Transverse colon (tissue), 4 donors: ENCODE measurements at regions of chr2 and their contacts with region 1.

Region 1: GRCh38 chr2:35228584-35228983 is 1127.0 kb upstream of the CRIM1 start:
- DNase-seq: no peak
- H3K4me3 ChIP-seq: no peak overlapping the region
- H3K27ac ChIP-seq: no peak overlapping the region
- H3K4me1 ChIP-seq: no peaks in the 10 kb centered on the region
- H3K27me3 ChIP-seq: no peaks in the 10 kb centered on the region
- CTCF ChIP-seq: no peak
- EP300 ChIP-seq: no peak
- POLR2A ChIP-seq: no peak

Region 2: DNA sequence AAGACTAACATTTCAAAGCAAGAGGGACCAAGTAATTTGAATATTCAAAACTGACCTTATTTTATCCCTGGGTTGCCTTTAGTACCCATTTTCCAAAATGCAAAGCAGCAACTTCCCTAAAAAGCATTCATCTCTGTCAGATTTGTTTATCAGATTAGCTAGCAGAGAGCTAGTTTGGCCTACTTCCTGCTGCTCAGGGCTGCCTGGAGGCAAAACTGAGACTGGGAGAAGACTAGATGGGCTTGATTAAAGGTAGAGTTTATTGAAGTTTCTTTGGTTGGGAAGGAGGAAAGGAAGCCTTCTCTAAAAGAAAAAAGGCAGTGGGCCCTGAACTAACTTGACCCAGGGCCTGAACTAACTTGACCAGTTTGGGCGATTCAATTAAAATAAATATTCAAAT is 1203.4 kb before region 1 on chr2:
- in situ Hi-C with region 1: no loop called
- intact Hi-C with region 1: no loop called
- DNase-seq: no peak
- H3K4me3 ChIP-seq: no peak overlapping the region
- H3K27ac ChIP-seq: no peak overlapping the region
- H3K4me1 ChIP-seq: no peaks in the 10 kb centered on the region
- H3K27me3 ChIP-seq: no peaks in the 10 kb centered on the region
- CTCF ChIP-seq: no peak
- EP300 ChIP-seq: no peak
- POLR2A ChIP-seq: no peak

Region 3: GRCh38 chr2:35199313-35199712 is 29.3 kb before region 1 on chr2:
- in situ Hi-C with region 1: no loop called
- intact Hi-C with region 1: no loop called
- DNase-seq: no peak
- H3K4me3 ChIP-seq: no peak overlapping the region
- H3K27ac ChIP-seq: no peak overlapping the region
- H3K4me1 ChIP-seq: no peaks in the 10 kb centered on the region
- H3K27me3 ChIP-seq: no peaks in the 10 kb centered on the region
- CTCF ChIP-seq: no peak
- EP300 ChIP-seq: no peak
- POLR2A ChIP-seq: no peak

Region 4: DNA sequence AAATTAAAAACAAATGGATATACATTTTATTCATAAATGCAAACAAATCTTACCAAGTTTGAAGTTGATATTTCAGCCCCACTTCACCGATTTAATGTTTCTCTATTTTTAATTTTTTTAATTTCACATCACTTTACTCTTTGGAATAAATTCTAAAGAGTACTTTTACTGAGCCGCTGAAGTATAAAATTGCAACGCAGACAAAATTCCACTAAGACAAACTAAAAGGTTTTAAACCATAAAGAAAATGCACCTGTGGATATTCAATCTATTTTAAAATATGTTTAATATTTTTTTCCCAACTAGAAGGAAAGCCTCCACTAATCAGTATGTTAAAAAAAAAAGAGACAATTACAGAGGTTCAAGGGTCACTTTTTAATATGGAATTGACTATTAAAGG is 53.1 kb after region 1 on chr2:
- in situ Hi-C with region 1: no loop called
- intact Hi-C with region 1: loop called (anchors 2 kb)
- DNase-seq: no peak
- H3K4me3 ChIP-seq: no peak overlapping the region
- H3K27ac ChIP-seq: no peak overlapping the region
- H3K4me1 ChIP-seq: no peaks in the 10 kb centered on the region
- H3K27me3 ChIP-seq: no peaks in the 10 kb centered on the region
- CTCF ChIP-seq: no peak
- EP300 ChIP-seq: no peak
- POLR2A ChIP-seq: no peak